ENCODE measurements at regions of chr12 and their contacts with region 1.

Region 1: GRCh38 chr12:24544368-24544767 is 404.5 kb downstream of the BCAT1 start:
- DNase-seq: no peak
- ATAC-seq: no peak
- H3K4me3 ChIP-seq: no peak overlapping the region
- H3K27ac ChIP-seq: no peak overlapping the region
- H3K4me1 ChIP-seq: no peaks in the 10 kb centered on the region
- H3K27me3 ChIP-seq: peaks cover 4% of the 10 kb centered on the region; the same call in 1 of the 2 replicates
- CTCF ChIP-seq: no peak

Region 2: DNA sequence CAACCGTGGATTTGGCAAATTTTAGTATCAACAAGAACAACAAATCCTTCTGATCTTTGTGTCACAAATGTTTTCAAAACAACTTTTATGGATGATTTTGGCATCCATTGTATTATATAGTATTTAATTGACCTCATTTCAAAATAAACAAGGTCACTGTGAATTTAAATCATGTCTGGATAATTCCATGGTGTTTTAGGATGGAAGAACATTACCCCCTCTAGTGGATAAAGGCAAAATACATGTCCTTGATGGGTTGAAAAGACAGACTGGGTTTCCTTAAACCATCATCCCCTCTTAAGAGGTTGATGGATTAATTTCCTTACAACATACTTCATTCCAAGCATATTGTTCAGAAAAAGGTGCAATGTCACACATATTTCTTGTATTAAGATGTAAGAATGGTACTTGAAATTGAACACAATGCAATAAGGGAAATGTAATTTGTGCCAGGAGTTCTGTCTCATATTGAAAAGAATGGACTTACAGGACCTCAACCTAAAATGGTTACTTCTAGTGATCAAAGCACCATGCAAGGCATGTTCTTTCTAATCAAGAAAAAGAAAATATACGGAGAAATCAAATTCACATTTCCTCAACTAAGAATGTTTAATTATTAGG is 52.5 kb after region 1 on chr12:
- CTCF ChIA-PET with region 1: no interaction called
- POLR2A ChIA-PET with region 1: no interaction called
- intact Hi-C with region 1: loop called (anchors 5 kb)
- DNase-seq: peak; percentile 33
- ATAC-seq: no peak
- H3K4me3 ChIP-seq: no peak overlapping the region
- H3K27ac ChIP-seq: no peak overlapping the region
- H3K4me1 ChIP-seq: no peaks in the 10 kb centered on the region
- H3K27me3 ChIP-seq: peaks cover 6% of the 10 kb centered on the region; the same call in 1 of the 2 replicates
- CTCF ChIP-seq: peak; percentile 60